Naive thymus-derived CD8-positive, alpha-beta T cell (primary cell): ENCODE measurements at regions of chr21 and their contacts with region 1.

Region 1: GRCh38 chr21:39349211-39350093 is 564 bp upstream of the HMGN1 start:
- DNase-seq: peak; percentile 93 to 98 (median 97)
- ATAC-seq: peak; percentile 85
- H3K4me3 Mint-ChIP-seq: peak overlapping the region; percentile 91 to 100 (median 96)
- H3K27ac Mint-ChIP-seq: peak overlapping the region; percentile 96 to 100 (median 99)
- H3K4me1 Mint-ChIP-seq: peaks cover 25 to 46% (median 37%) of the 10 kb centered on the region in 4 donors
- H3K27me3 Mint-ChIP-seq: peaks cover 0 to 5% (median 0%) of the 10 kb centered on the region in 5 donors

Region 2: DNA sequence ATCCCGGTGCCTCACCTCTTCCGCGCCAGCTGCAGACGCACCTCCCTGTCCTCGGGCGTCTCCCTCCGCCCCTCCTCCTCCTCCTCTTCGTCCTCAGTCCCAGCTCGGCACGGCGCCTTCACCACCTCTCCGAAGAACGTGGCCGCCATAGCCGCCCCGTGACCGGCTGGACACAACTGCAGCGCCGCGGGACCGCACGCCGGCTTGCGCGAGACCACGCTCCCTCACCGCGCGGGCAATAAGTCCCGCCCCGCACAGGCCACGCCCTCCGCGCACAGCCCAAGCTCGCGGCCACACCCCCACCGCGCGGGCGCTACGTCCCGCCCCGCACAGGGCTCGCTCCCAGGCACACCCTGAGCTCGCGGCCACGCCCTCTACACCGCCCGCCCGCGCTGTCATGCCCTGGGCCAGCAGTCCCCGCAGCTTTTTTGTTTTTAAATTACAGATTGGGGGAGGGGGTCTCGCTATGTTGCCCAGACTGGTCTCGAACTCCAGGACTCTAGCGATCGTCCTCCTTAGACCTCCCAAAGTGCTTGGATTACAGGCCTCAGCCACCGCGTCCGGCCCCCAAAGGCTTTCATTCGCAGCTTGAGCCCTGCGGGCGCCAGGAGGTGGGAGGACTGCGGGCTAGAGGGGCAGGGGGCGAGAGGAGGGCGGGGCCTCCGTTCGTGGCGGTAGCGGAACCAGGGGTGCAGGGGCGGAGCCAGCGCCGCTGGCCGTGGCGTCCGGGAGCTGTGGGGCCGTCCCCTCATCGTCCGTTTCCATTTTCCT is 166.0 kb before region 1 on chr21 and contains the start of gene PSMG1:
- POLR2A ChIA-PET with region 1: interaction called, 18 read pairs
- DNase-seq: peak; percentile 86 to 95 (median 93)
- ATAC-seq: peak; percentile 88 to 90
- H3K4me3 Mint-ChIP-seq: peak within 1 kb of the TSS; percentile 89 to 99 (median 96)
- H3K27ac Mint-ChIP-seq: peak within 1 kb of the TSS; percentile 83 to 99 (median 96)
- H3K4me1 Mint-ChIP-seq: peaks cover 17 to 50% (median 44%) of the 10 kb centered on the region in 4 donors
- H3K27me3 Mint-ChIP-seq: no peaks in the 10 kb centered on the region
- polyA plus RNA-seq, gene PSMG1: 27.3 to 39.0 (median 36.8) TPM

Region 3: DNA sequence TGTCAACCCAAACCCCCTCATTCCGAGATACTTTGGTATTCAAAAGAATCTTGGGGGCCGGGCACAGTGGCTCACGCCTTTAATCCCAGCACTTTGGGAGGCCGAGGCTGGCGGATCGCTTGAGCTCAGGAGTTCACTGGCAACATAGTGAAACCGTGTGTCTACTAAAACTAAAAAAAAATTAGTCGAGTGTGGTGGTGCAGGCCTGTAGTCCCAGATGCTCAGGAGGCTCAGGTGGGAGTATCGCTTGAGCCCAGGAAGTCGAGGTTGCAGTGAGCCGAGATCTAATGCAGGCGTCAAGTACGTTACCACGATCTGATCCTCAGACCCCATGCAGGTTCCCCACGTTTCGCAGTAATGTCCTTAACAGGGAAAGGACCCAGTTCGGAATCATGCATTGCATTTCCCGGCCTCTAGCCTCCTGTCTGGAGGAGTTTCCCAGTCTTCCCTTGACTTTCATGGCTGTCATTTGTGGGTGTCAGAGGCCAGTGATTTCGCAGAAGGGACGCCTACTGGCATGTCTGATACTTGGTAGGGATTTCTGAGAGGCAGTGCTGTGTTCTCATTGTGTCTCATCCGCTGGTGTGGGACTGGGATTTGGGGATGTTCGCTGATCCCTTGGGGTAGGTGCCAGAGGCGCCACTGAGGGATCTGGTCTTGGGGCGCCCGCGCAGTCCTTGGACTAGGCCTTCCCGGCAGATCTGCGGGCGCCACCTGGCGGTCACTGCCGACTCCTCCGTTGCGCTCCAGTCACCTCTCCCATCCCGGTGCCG is 38.8 kb after region 1 on chr21:
- POLR2A ChIA-PET with region 1: interaction called, 30 read pairs
- DNase-seq: peak; percentile 72 to 94 (median 85)
- ATAC-seq: peak; percentile 79 to 81
- H3K4me3 Mint-ChIP-seq: peak overlapping the region; percentile 81 to 93 (median 88)
- H3K27ac Mint-ChIP-seq: peak overlapping the region; percentile 63 to 96 (median 90)
- H3K4me1 Mint-ChIP-seq: peaks cover 15 to 40% (median 33%) of the 10 kb centered on the region in 4 donors
- H3K27me3 Mint-ChIP-seq: no peaks in the 10 kb centered on the region